Activated CD8-positive, alpha-beta T cell treated with anti-CD3 and anti-CD28 coated beads, Interleukin-2, amount 10 ng/mL, durations not matched to agents 7 days and 5 days (primary cell): ENCODE measurements at regions of chr15 and their contacts with region 1.

Region 1: DNA sequence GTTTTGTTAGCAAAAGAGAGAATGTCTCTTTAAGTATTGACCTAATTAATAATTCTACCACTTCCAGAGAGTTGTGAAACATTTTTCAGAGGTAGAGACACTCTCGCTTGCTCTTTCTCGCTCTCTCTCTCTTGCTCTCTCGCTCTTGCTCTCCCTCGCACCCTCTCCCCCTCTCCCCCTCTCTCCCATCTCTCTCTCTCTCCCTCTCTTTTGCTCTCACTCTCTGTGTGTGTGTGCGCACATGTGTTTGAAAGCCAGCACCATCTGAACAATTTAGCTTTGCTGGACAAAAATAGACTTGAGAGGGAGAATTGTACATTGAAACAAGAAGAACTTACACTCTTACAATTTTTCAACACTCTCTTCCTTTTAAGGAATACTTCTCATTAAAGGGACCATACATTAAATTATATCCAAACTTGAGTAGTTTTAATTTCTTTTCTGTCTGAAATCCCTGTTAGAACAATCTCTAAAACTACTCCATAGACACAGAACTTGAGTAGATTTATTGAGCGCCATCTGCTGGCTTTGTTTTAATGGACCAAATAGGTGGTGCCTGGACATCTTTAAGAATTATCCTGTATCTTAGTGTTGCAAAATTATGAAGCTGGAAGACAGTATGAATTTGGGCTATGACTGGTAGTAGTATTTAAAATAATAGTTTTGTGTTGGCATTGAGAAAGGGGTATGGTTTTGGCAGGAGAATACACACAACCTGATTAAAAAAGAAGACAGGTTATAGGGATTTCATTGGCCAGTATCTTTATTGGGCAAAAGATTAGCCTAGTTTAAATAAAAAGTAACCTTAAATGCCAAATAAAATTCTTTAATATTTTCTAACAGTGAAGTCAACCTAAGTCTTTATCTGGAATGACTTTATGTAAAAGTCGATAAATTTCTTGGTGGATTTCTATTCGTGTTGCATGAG is 124.6 kb downstream of the AKAP13 start:
- DNase-seq: peak; percentile 66
- ATAC-seq: no peak
- H3K4me3 Mint-ChIP-seq: no peak overlapping the region
- H3K27ac Mint-ChIP-seq: peak overlapping the region; percentile 28
- H3K4me1 Mint-ChIP-seq: peaks cover 10% of the 10 kb centered on the region
- H3K27me3 Mint-ChIP-seq: no peaks in the 10 kb centered on the region

Region 2: DNA sequence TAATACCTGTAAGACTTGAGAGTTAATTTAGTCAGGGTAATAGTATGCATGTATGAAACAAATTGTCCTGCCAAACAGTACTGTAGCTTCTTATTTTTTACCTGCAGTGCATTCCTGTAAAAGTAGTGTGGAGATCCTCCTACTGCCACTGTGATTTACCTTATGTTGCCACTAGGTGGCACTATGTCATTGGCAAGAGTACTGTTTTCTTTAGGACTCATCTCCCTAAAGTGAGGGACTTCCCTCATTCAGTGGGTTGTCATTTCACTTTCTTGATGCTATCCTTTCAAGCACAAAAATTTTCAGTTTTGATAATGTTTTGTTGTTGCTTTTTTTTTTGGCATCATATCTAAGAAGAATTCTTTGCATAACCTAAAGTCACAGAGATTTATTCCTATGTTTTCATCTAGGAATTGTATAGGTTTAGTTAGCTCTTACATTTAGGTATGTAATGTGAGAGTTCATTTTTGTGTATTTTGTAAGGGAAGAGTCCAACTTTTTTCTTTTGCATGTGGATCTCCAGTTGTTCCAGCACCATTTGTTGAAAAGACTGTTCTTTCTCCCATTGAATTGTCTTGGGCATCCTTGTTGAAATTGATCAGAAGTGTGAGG is 19.0 kb before region 1 on chr15:
- CTCF ChIA-PET with region 1: interaction called, 32 read pairs
- POLR2A ChIA-PET with region 1: no interaction called
- DNase-seq: peak; percentile 79
- ATAC-seq: peak; percentile 83
- H3K4me3 Mint-ChIP-seq: no peak overlapping the region
- H3K27ac Mint-ChIP-seq: no peak overlapping the region
- H3K4me1 Mint-ChIP-seq: peaks cover 46% of the 10 kb centered on the region
- H3K27me3 Mint-ChIP-seq: no peaks in the 10 kb centered on the region

Region 3: GRCh38 chr15:85494048-85494793 is 10.8 kb before region 1 on chr15:
- CTCF ChIA-PET with region 1: interaction called, 32 read pairs
- POLR2A ChIA-PET with region 1: no interaction called
- DNase-seq: no peak
- ATAC-seq: no peak
- H3K4me3 Mint-ChIP-seq: no peak overlapping the region
- H3K27ac Mint-ChIP-seq: no peak overlapping the region
- H3K4me1 Mint-ChIP-seq: peaks cover 13% of the 10 kb centered on the region
- H3K27me3 Mint-ChIP-seq: no peaks in the 10 kb centered on the region

Region 4: GRCh38 chr15:85899927-85900326 is 394.9 kb after region 1 on chr15:
- CTCF ChIA-PET with region 1: no interaction called
- POLR2A ChIA-PET with region 1: no interaction called
- DNase-seq: no peak
- ATAC-seq: no peak
- H3K4me3 Mint-ChIP-seq: no peak overlapping the region
- H3K27ac Mint-ChIP-seq: no peak overlapping the region
- H3K4me1 Mint-ChIP-seq: no peaks in the 10 kb centered on the region
- H3K27me3 Mint-ChIP-seq: peaks cover 21% of the 10 kb centered on the region